BJ (cell line): ENCODE measurements at regions of chr21 and their contacts with region 1.

Region 1: GRCh38 chr21:36141513-36141925 is 6.6 kb downstream of the CBR3 start:
- DNase-seq: no peak
- H3K4me3 ChIP-seq: no peak overlapping the region
- H3K27me3 ChIP-seq: no peaks in the 10 kb centered on the region
- CTCF ChIP-seq: peak; percentile 81

Region 2: GRCh38 chr21:35953615-35954014 is 187.9 kb before region 1 on chr21:
- CTCF ChIA-PET with region 1: no interaction called
- POLR2A ChIA-PET with region 1: no interaction called
- DNase-seq: no peak
- H3K4me3 ChIP-seq: no peak overlapping the region
- H3K27me3 ChIP-seq: peaks cover 19% of the 10 kb centered on the region
- CTCF ChIP-seq: no peak

Region 3: DNA sequence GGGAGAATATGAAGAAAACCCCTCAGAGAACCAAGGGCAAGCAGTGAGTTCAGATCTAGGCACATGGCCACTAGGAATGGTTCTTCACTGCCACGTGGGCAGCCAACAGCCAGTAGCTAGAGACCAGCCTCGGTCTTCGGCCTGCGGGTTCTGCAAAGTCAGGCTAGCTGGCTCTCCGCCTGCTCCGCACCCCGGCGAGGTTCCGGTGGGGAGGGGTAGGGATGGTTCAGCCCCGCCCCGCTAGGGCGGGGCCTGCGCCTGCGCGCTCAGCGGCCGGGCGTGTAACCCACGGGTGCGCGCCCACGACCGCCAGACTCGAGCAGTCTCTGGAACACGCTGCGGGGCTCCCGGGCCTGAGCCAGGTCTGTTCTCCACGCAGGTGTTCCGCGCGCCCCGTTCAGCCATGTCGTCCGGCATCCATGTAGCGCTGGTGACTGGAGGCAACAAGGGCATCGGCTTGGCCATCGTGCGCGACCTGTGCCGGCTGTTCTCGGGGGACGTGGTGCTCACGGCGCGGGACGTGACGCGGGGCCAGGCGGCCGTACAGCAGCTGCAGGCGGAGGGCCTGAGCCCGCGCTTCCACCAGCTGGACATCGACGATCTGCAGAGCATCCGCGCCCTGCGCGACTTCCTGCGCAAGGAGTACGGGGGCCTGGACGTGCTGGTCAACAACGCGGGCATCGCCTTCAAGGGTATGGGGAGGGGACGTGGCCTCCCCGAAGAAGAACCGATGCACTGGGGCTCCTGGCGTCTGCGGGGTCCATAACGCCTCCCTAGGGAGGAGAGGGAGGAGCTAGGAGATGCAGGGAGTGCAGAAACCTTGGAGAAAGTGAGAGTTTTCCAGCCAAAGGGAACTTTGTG is 71.6 kb before region 1 on chr21 and contains the start of gene CBR1:
- CTCF ChIA-PET with region 1: no interaction called
- POLR2A ChIA-PET with region 1: no interaction called
- DNase-seq: peak; percentile 64
- H3K4me3 ChIP-seq: peak within 1 kb of the TSS; percentile 87
- H3K27me3 ChIP-seq: no peaks in the 10 kb centered on the region
- CTCF ChIP-seq: no peak
- polyA plus RNA-seq, gene CBR1: 105 and 157 TPM in 2 replicates

Region 4: GRCh38 chr21:36113647-36114428 is 27.7 kb before region 1 on chr21:
- CTCF ChIA-PET with region 1: interaction called, 3 read pairs
- POLR2A ChIA-PET with region 1: interaction called, 30 read pairs
- DNase-seq: no peak
- H3K4me3 ChIP-seq: no peak overlapping the region
- H3K27me3 ChIP-seq: 0 out of 2 replicates have a peak, but pooled peaks cover 1% of the 10 kb centered on the region
- CTCF ChIP-seq: no peak

Region 5: GRCh38 chr21:36156339-36156814 is 14.9 kb after region 1 on chr21:
- CTCF ChIA-PET with region 1: interaction called, 16 read pairs
- POLR2A ChIA-PET with region 1: no interaction called
- DNase-seq: peak; percentile 91
- H3K4me3 ChIP-seq: peak overlapping the region; percentile 91
- H3K27me3 ChIP-seq: no peaks in the 10 kb centered on the region
- CTCF ChIP-seq: no peak

Region 6: DNA sequence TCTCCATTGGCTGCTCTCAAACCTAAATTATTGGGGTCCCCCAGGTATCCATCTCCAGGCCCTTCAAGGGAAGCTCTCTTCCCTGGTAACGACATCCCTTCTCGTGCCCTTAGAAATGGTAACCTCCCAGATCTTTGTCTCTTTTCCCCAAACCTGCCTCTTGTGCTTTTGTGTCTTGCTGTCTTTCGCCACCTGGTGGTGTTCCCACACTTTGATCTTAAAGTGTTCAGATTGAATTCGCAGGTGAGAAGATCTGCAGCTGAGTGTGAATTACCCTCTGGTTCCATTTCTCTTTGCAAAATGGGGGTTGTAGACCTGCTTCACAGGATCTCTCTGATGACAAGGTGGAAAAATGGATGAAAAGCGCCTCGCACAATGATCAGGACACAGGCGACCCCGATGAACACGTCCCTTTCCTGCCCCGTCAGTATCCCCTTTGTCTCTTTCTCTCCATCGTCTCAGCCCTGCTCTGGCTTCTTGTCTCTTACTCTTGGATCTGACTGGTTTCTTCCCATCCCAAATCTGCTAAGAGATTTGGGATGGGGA is 68.2 kb after region 1 on chr21:
- CTCF ChIA-PET with region 1: interaction called, 63 read pairs
- POLR2A ChIA-PET with region 1: no interaction called
- DNase-seq: no peak
- H3K4me3 ChIP-seq: no peak overlapping the region
- H3K27me3 ChIP-seq: no peaks in the 10 kb centered on the region
- CTCF ChIP-seq: peak; percentile 63

Region 7: DNA sequence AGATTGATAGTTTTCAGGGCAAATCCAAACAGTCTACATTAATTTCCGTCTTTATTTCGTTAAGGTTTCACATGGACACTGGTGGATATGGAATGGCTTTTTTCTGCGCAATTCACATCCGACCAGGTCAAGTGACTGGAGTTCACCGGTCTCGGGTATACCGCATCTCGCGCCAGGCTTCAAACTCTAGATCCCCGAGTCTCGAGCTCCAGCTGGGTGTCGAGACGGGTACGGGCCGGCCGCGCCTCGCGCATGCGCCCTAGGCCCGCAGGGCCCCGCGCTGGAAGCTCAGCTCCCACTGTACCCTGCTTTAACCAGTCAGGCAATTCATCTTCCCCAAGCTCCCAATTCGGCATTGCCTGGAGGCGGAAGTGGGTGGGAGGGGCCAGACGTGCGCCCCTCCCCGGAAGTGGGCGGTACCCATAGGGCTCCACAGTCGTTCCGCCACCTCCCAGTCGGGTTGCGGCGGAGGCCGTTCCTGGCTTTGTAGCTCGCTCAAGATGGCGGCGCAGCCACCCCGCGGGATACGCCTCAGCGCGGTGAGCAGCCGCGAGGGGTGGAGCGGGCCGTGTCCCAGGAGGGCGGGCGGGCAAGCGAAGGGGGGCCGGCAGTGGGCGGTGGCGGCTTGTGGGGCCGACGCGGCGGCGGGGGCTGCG is 178.4 kb after region 1 on chr21 and contains the start of gene MORC3:
- CTCF ChIA-PET with region 1: interaction called, 12 read pairs
- POLR2A ChIA-PET with region 1: interaction called, 4 read pairs
- DNase-seq: peak; percentile 95
- H3K4me3 ChIP-seq: peak within 1 kb of the TSS; percentile 82
- H3K27me3 ChIP-seq: no peaks in the 10 kb centered on the region; the same call in 1 of the 2 replicates
- CTCF ChIP-seq: no peak
- polyA plus RNA-seq, gene MORC3: 8.8 and 19.6 TPM in 2 replicates

Region 8: GRCh38 chr21:36330904-36331303 is 189.4 kb after region 1 on chr21:
- CTCF ChIA-PET with region 1: interaction called, 11 read pairs
- POLR2A ChIA-PET with region 1: no interaction called
- DNase-seq: no peak
- H3K4me3 ChIP-seq: no peak overlapping the region
- H3K27me3 ChIP-seq: no peaks in the 10 kb centered on the region
- CTCF ChIP-seq: peak; percentile 72

Region 9: DNA sequence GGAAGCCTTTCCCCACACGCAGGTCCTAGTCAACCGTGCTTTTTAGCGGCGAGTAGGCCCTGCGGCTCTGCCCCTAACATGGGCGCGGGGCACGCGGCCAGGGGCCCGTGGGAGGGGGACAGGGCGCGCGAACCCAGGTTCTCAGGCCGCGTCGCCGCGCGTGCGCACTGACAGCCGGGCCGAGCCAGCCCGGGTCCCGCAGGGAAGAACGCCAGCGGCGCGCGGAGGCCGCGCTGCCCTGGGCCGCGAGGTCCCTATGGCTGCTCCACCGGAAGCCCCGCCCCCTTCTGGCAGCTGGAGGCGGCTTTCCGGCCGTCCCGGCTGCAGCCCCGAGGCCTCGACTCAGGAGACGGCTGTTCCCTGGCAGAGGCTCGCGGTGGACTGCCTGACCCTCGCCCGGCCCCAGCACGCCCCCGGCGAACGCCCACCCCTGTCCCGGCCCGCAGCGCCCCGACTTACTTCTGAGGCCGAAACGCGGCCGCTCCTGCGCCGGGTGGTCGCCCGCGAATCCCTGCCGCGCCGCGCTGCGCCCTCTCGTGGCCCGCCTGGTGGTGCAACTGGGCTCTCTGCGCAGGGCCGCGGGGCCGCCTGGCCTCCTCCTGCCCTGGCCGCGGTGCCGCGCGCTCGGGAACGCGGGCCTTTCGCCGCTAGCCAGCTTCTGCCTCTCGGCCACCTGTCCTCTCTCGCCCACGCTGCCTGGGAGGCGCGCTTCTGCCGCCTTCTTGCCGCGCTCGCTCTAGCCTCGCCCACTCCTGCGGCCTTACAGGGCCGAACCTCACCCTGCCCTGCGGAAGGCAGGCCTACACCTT is 848.4 kb after region 1 on chr21:
- CTCF ChIA-PET with region 1: no interaction called
- POLR2A ChIA-PET with region 1: no interaction called
- DNase-seq: peak; percentile 37
- H3K4me3 ChIP-seq: peak overlapping the region; percentile 58
- H3K27me3 ChIP-seq: no peaks in the 10 kb centered on the region
- CTCF ChIP-seq: peak; percentile 37; the same call in 1 of the 2 replicates

Region 10: GRCh38 chr21:37088186-37088735 is 946.7 kb after region 1 on chr21:
- CTCF ChIA-PET with region 1: no interaction called
- POLR2A ChIA-PET with region 1: no interaction called
- DNase-seq: no peak
- H3K4me3 ChIP-seq: no peak overlapping the region
- H3K27me3 ChIP-seq: no peaks in the 10 kb centered on the region
- CTCF ChIP-seq: no peak